Sciatic nerve (tissue), 2 donors: ENCODE measurements at regions of chr2 and their contacts with region 1.

Region 1: DNA sequence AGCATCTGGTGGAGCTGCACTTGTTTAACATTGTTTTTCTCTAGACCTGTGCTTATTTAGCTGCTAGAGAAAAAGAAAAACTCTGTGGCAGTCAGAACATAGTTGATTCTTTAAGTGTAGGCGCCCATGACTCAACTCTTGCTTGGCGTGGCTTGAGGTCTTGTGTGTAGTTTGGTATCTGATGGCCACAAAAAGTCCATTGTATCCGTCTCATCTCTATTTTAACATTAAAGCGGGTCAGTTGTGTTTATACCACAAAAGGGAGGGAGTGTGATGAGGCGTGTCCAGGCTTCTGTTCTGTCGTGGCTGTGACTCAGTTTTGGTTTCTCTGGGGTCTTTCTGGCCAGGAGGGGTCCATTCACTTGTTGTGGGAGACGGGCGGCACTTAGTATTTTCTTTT is 24.2 kb upstream of the UGT1A8 start:
- DNase-seq: no peak
- ATAC-seq: no peak

Region 2: GRCh38 chr2:233700028-233700635 is 106.9 kb after region 1 on chr2:
- intact Hi-C with region 1: loop called (anchors 10 kb)
- DNase-seq: no peak
- ATAC-seq: no peak

Region 3: DNA sequence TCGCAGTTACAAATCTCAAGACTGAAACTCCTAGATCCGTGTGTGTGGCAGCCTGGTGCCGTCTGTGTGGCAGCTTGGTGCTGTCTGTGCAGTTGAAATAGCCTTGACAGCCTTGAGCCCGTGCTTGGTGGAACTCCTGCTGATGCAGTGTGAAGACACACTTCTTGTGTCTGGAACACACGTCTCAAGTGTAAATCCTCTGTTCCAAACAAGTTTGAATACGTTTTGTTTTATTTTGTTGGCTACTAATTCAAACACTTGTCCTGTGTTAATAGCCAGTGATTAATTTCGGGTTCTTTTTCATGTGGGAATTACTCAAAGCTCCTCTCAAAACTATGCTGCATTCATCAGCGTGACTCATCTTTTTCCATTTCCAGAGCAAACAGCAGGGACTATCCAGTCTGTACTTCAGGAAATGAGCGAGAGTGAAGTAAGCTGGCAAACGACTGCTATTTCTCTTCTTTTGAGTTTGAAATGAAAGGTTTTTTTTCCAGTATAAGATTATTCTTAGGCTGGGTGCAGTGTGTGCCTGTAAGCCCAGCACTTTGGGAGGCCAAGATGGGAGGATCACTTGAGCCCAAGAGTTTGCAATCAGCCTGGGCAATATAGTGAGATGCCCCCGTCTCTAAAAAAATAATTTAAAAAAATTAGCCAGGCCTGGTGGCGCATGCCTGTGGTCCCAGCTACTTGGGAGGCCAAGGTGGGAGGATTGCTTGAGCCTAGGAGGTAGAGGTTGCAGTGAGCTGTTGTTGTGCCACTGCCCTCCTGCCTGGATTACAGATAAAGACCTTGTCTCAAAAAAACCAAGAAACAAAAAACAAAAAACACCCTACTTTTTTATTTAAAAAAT is 610.2 kb after region 1 on chr2:
- intact Hi-C with region 1: loop called (anchors 5 kb)
- DNase-seq: no peak
- ATAC-seq: peak; percentile 90